MCF 10A (cell line): ENCODE measurements at regions of chr4 and their contacts with region 1.

Region 1: GRCh38 chr4:161252520-161253141 is 911.2 kb downstream of the FSTL5 start:
- DNase-seq: peak; percentile 52
- H3K4me3 Mint-ChIP-seq: no peak overlapping the region
- H3K27ac Mint-ChIP-seq: no peak overlapping the region
- H3K4me1 Mint-ChIP-seq: no peaks in the 10 kb centered on the region
- H3K27me3 Mint-ChIP-seq: no peaks in the 10 kb centered on the region
- CTCF ChIP-seq: peak; percentile 63

Region 2: DNA sequence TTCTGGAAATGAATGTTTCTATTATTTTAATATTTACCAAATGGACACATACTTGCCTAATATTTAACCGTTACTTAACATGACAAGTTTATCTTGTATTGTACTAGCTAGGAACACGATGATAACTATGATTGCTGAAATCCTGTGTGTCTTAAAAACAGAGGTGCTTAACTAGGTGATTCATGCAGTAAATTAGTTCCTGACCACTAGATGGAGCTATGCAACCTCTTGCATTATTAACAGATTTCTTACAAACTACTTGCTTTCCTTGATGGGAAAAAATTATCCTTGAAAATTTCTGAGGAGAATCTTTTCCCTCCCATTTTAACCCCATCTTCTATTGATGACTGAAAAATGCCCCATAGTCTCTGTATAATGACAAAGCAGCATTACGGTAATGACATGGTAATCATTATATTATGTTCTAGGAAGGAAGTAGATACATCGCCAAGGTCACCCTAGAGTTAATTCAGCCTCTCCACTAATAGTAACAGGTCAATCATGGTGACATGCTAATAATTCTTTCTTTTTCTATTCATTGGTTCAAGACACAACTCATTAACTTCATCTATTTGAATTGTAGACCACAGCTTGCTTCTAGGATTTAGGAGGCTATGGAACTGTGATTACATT is 1305.5 kb before region 1 on chr4:
- CTCF ChIA-PET with region 1: interaction called, 5 read pairs
- POLR2A ChIA-PET with region 1: no interaction called
- intact Hi-C with region 1: loop called (anchors 5 kb)
- DNase-seq: peak; percentile 77
- H3K4me3 Mint-ChIP-seq: no peak overlapping the region
- H3K27ac Mint-ChIP-seq: no peak overlapping the region
- H3K4me1 Mint-ChIP-seq: no peaks in the 10 kb centered on the region
- H3K27me3 Mint-ChIP-seq: no peaks in the 10 kb centered on the region
- CTCF ChIP-seq: peak; percentile 66

Region 3: DNA sequence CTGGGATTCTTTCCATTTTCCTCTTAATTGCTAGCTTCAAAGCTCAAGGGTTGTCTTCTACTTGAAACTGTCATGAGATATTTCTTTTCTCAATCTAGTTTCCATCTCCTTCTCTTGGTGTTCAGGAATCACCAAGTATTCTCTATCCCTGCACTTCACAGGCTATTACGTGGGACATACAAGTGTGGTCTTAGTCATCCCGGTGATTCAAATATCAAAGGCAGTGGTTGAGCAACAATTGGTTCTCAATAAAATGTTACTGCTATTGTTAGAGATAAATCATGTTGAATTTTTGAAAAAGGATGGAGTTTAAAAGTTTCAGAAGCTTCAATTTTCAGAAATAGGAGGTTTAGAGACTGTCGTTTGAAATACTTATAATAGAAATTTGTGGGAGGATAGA is 98.3 kb after region 1 on chr4:
- CTCF ChIA-PET with region 1: no interaction called
- POLR2A ChIA-PET with region 1: no interaction called
- intact Hi-C with region 1: no loop called
- DNase-seq: peak; percentile 48
- H3K4me3 Mint-ChIP-seq: no peak overlapping the region
- H3K27ac Mint-ChIP-seq: no peak overlapping the region
- H3K4me1 Mint-ChIP-seq: peaks cover 5% of the 10 kb centered on the region
- H3K27me3 Mint-ChIP-seq: no peaks in the 10 kb centered on the region
- CTCF ChIP-seq: no peak

Region 4: DNA sequence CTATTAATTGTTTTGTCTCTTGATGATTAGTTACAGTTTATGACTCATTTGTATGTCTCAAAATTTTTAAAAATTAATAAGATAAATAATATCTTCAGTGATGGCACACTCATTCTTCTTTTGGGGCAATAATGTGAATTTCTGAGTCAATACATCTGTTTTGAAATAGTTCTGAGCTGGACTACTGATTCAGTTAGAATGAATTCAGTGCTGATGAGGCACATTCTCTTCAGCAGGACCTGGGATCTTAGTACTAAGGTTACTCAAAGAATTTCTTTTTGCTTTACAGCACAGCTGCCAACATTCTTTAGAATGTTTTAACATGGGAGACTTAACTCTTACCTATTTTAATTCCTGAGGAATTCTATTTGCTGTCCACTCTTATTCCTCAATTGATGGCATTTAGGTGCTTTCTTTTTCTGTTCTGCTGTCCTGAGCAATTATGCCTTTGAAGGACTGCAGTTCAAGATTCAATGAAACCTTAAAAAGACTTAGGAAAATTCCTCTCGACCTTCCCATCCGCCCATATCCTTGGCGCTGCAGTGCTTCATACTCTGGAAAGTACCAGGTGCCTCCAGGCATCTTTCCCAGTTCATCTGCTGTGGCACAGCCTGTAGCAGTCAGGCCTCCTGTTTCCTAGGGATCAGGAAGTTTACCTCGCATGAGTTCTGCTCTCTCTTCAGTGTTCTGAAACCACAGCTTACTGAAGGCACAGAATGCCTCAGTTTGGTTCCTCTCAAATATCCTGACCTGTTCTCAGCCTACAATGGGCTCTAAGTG is 697.5 kb after region 1 on chr4:
- CTCF ChIA-PET with region 1: interaction called, 5 read pairs
- POLR2A ChIA-PET with region 1: no interaction called
- intact Hi-C with region 1: loop called (anchors 1 kb)
- DNase-seq: peak; percentile 10
- H3K4me3 Mint-ChIP-seq: peak overlapping the region; percentile 59
- H3K27ac Mint-ChIP-seq: peak overlapping the region; percentile 88
- H3K4me1 Mint-ChIP-seq: peaks cover 9% of the 10 kb centered on the region
- H3K27me3 Mint-ChIP-seq: no peaks in the 10 kb centered on the region
- CTCF ChIP-seq: no peak

Region 5: DNA sequence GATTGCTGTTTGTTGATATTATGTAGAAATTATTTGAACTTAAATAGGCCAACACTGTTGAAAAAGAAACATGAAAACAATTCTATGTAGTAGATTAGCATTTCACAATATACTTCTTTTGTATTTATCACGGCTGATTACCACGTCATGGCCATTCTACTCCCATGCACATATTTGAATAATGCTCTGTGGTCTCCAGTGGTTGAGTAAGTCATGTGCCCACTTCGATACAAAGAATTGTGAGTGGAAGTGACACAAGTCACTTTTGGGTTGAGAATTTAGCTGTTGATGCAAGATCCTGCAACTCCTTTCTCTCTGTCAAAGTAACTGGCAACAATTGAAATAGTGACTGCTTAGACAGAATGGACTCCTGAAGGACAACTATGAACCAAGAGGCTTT is 917.9 kb after region 1 on chr4:
- CTCF ChIA-PET with region 1: interaction called, 10 read pairs
- POLR2A ChIA-PET with region 1: no interaction called
- intact Hi-C with region 1: loop called (anchors 1 kb)
- DNase-seq: no peak
- H3K4me3 Mint-ChIP-seq: no peak overlapping the region
- H3K27ac Mint-ChIP-seq: no peak overlapping the region
- H3K4me1 Mint-ChIP-seq: peaks cover 8% of the 10 kb centered on the region
- H3K27me3 Mint-ChIP-seq: no peaks in the 10 kb centered on the region
- CTCF ChIP-seq: no peak